ENCODE measurements at regions of chr20 and their contacts with region 1.

Region 1: DNA sequence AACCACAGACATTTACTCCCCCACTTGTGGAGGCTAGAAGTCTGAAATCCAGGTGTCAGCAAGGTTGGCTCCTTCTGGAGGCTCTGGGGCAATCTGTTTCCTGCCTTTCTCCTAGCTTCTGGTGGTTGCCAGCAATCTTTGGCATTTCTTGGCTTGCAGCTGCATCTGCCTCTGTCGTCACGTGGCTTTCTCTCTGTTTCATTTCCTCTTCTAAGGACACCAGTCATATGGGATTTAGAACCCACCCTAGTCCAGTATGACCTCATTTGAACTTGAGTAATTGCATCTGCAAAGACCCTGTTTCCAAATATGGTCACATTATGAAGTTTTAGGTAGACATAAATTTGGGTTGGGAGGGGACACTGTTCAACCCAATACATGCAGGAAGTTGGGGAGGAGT is 56.2 kb upstream of the EPB41L1 start:
- DNase-seq: no peak
- ATAC-seq: no peak
- H3K4me3 ChIP-seq: no peak overlapping the region
- H3K27ac ChIP-seq: no peak overlapping the region
- H3K4me1 ChIP-seq: peaks cover 18% of the 10 kb centered on the region in 2 experiments
- H3K27me3 ChIP-seq: no peaks in the 10 kb centered on the region
- CTCF ChIP-seq: no peak
- EP300 ChIP-seq: no peak
- POLR2A ChIP-seq: no peak
- RAD21 ChIP-seq: no peak

Region 2: GRCh38 chr20:36132802-36133211 is 34.4 kb after region 1 on chr20:
- CTCF ChIA-PET with region 1: no interaction called
- POLR2A ChIA-PET with region 1: no interaction called
- in situ Hi-C with region 1: no loop called
- intact Hi-C with region 1: loop called (anchors 5 kb)
- DNase-seq: no peak
- ATAC-seq: no peak
- H3K4me3 ChIP-seq: no peak overlapping the region
- H3K27ac ChIP-seq: no peak overlapping the region
- H3K4me1 ChIP-seq: no peaks in the 10 kb centered on the region
- H3K27me3 ChIP-seq: no peaks in the 10 kb centered on the region
- CTCF ChIP-seq: no peak
- EP300 ChIP-seq: no peak
- POLR2A ChIP-seq: no peak
- RAD21 ChIP-seq: no peak

Measured in K562 (cell line).